ENCODE measurements at regions of chrX and their contacts with region 1.

Region 1: GRCh38 chrX:74550295-74550802 is 64.1 kb downstream of the RLIM start:
- DNase-seq: peak; percentile 86
- H3K4me3 Mint-ChIP-seq: no peak overlapping the region
- H3K27ac Mint-ChIP-seq: no peak overlapping the region
- H3K4me1 Mint-ChIP-seq: peaks cover 3% of the 10 kb centered on the region
- H3K27me3 Mint-ChIP-seq: no peaks in the 10 kb centered on the region

Region 2: DNA sequence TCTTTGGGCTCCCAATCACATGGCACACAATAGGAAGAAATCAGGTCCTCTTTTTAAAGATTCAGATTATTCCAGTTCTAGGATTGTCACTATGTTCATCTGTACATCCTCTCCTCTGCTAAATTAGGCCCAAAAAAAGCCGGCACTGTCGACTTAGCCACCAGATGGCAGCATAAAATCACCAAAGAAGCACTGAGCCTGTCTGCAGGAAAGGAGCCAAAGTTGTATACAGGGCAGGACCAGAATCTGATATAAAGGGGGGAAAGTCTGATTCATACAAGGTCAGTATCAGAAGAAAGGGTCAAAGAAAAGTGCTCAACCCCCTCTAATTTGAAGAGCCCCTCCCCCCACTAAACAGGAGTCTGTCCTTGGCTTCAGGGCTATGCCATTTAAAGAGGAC is 694.8 kb before region 1 on chrX:
- CTCF ChIA-PET with region 1: no interaction called
- POLR2A ChIA-PET with region 1: no interaction called
- intact Hi-C with region 1: loop called (anchors 10 kb)
- DNase-seq: peak; percentile 66
- H3K4me3 Mint-ChIP-seq: no peak overlapping the region
- H3K27ac Mint-ChIP-seq: no peak overlapping the region
- H3K4me1 Mint-ChIP-seq: no peaks in the 10 kb centered on the region
- H3K27me3 Mint-ChIP-seq: no peaks in the 10 kb centered on the region

Region 3: DNA sequence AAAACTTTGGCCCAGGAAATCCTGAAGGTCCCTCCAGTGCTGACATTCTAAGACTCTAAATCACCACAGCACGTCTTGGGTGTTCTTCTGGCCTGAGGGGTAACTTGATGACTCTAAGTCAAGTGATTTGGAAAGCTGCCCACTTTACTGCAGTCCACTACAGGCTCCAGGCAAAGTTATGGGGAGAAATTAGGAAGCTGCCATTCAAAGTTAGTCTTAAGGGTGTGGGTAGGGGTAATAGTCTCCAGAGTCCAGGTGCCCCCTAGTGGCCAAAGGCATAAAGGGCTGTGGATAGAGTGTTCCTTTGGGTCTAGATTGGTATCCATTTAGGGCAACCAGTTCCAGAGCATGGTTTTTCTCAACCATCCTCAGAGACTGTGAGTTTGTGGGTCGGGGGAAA is 167.7 kb before region 1 on chrX:
- CTCF ChIA-PET with region 1: interaction called, 18 read pairs
- POLR2A ChIA-PET with region 1: no interaction called
- intact Hi-C with region 1: loop called (anchors 1 kb)
- DNase-seq: peak; percentile 68
- H3K4me3 Mint-ChIP-seq: no peak overlapping the region
- H3K27ac Mint-ChIP-seq: no peak overlapping the region
- H3K4me1 Mint-ChIP-seq: no peaks in the 10 kb centered on the region
- H3K27me3 Mint-ChIP-seq: no peaks in the 10 kb centered on the region

Region 4: DNA sequence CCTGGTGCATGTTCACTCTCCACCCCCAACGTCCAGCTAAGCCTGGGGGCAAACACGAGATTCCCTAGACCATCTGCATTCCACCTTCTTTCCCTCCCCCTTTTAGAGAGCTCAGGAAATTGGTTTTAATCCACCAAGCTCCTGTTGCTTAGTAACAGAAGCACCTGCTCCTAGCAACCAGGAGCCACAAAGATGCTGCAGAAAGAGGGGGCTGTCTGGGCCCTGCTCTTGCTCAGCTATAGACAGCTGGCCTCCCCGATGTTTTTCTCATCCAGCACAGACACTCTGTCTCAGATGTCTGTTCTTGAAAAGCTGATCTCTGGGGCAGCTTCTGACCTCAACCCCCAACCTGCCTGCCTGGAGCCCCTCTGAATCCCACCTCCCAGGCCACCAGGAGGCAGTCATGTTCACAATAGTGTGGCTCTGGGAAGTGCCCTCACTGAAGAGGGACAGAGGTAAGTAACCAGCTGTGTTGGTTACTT is 57.6 kb before region 1 on chrX:
- CTCF ChIA-PET with region 1: interaction called, 7 read pairs
- POLR2A ChIA-PET with region 1: no interaction called
- intact Hi-C with region 1: loop called (anchors 2 kb)
- DNase-seq: peak; percentile 38
- H3K4me3 Mint-ChIP-seq: no peak overlapping the region
- H3K27ac Mint-ChIP-seq: no peak overlapping the region
- H3K4me1 Mint-ChIP-seq: no peaks in the 10 kb centered on the region
- H3K27me3 Mint-ChIP-seq: no peaks in the 10 kb centered on the region

Region 5: DNA sequence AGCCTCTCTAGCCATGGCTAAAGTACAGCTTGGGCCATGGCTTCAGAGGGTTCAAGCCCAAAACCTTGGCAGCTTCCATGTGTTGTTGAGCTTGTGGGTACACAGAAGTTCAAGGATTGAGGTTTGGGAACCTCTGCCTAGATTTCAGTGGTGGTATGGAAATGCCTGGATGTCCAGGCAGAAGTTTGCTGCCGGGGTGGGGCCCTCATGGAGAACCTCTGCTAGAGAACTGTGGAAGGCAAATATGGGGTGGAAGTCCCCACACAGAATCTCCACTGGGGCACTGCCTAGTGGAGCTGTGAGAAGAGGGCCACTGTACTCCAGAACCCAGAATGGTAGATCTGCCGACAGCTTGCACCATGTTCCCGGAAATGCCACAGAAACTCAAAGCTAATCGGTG is 315.4 kb after region 1 on chrX:
- CTCF ChIA-PET with region 1: no interaction called
- POLR2A ChIA-PET with region 1: no interaction called
- intact Hi-C with region 1: no loop called
- DNase-seq: no peak
- H3K4me3 Mint-ChIP-seq: no peak overlapping the region
- H3K27ac Mint-ChIP-seq: no peak overlapping the region
- H3K4me1 Mint-ChIP-seq: no peaks in the 10 kb centered on the region
- H3K27me3 Mint-ChIP-seq: no peaks in the 10 kb centered on the region

Region 6: GRCh38 chrX:75603833-75604232 is 1053.5 kb after region 1 on chrX:
- CTCF ChIA-PET with region 1: no interaction called
- POLR2A ChIA-PET with region 1: no interaction called
- intact Hi-C with region 1: loop called (anchors 5 kb)
- DNase-seq: no peak
- H3K4me3 Mint-ChIP-seq: no peak overlapping the region
- H3K27ac Mint-ChIP-seq: no peak overlapping the region
- H3K4me1 Mint-ChIP-seq: no peaks in the 10 kb centered on the region
- H3K27me3 Mint-ChIP-seq: no peaks in the 10 kb centered on the region

Measured in activated CD4-positive, alpha-beta memory T cell treated with anti-CD3 and anti-CD28 coated beads for 36 hours (primary cell).